Activated B cell treated with CpG ODN at 0.5 μM for 24 hours (primary cell): ENCODE measurements at regions of chr10 and their contacts with region 1.

Region 1: GRCh38 chr10:97792141-97792721 is 20.4 kb upstream of the SFRP5 start:
- DNase-seq: peak; percentile 47
- ATAC-seq: no peak
- H3K4me3 Mint-ChIP-seq: no peak overlapping the region
- H3K27ac Mint-ChIP-seq: no peak overlapping the region
- H3K4me1 Mint-ChIP-seq: peaks cover 5% of the 10 kb centered on the region
- H3K27me3 Mint-ChIP-seq: peaks cover 22% of the 10 kb centered on the region
- CTCF ChIP-seq: peak; percentile 43

Region 2: GRCh38 chr10:97561678-97562077 is 230.6 kb before region 1 on chr10:
- CTCF ChIA-PET with region 1: no interaction called
- POLR2A ChIA-PET with region 1: no interaction called
- intact Hi-C with region 1: no loop called
- DNase-seq: no peak
- ATAC-seq: no peak
- H3K4me3 Mint-ChIP-seq: no peak overlapping the region
- H3K27ac Mint-ChIP-seq: no peak overlapping the region
- H3K4me1 Mint-ChIP-seq: no peaks in the 10 kb centered on the region
- H3K27me3 Mint-ChIP-seq: no peaks in the 10 kb centered on the region
- CTCF ChIP-seq: no peak

Region 3: GRCh38 chr10:97827778-97828291 is 35.6 kb after region 1 on chr10:
- CTCF ChIA-PET with region 1: no interaction called
- POLR2A ChIA-PET with region 1: no interaction called
- intact Hi-C with region 1: no loop called
- DNase-seq: no peak
- ATAC-seq: no peak
- H3K4me3 Mint-ChIP-seq: no peak overlapping the region
- H3K27ac Mint-ChIP-seq: no peak overlapping the region
- H3K4me1 Mint-ChIP-seq: no peaks in the 10 kb centered on the region
- H3K27me3 Mint-ChIP-seq: peaks cover 6% of the 10 kb centered on the region
- CTCF ChIP-seq: no peak

Region 4: DNA sequence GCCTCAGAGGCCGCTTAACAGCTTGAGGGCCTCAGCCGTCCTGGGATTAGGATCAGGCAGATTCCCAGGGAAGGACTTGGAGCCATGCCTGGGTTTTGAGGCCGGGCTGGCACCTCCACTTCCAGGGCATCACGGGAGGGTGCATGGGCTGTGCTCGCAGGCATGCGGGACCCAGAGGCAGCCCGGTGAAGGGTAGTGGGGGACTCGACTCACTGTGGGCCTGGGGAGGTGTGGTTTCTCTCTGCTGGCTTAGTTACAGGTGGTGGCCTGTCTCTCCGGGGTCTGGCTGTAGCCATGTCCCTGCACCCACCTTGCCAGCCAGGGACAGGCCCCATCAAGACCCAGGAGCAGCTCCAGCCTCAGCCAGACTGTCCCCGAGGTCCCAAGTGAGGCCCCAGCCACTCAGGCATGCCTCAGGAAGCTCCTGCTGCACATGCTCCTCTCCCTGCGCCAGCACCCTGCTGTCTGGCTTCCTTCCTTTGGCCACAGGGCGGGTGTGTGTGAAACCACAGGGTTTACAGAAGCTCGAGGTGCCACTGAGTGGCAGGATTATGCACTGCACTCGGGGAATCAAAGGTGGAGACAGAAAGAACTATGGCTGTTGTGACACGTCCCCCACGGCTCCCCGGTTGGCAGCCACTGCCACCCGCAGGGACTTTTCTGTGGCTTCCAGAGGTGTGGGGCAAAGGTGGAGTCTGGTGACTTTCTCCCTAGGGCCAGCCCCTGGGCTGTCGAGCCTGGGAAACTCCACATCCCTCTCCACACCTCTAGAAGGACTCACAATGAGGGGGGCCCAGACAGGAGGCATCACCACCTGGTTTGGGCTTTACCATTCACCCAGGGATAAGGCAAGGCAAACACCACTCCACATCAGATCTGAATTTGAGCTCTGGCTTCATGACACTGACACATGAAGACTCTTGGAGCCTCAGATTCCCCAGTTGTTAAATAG is 77.1 kb after region 1 on chr10:
- CTCF ChIA-PET with region 1: no interaction called
- POLR2A ChIA-PET with region 1: no interaction called
- intact Hi-C with region 1: loop called (anchors 1 kb)
- DNase-seq: no peak
- ATAC-seq: peak; percentile 56
- H3K4me3 Mint-ChIP-seq: no peak overlapping the region
- H3K27ac Mint-ChIP-seq: no peak overlapping the region
- H3K4me1 Mint-ChIP-seq: peaks cover 6% of the 10 kb centered on the region
- H3K27me3 Mint-ChIP-seq: peaks cover 24% of the 10 kb centered on the region
- CTCF ChIP-seq: no peak